Activated T-helper 1 cell treated with anti-CD3 and anti-CD28 coated beads, Interleukin-12 subunit alpha, Interleukin-12 subunit beta, Interleukin-2, Interleukin-4 antibody, amounts not matched to agents 30 ng/mL and 10 ng/mL and 1 ng/mL, durations not matched to agents 14 hours and 24 hours and 36 hours (primary cell): ENCODE measurements at regions of chr10 and their contacts with region 1.

Region 1: DNA sequence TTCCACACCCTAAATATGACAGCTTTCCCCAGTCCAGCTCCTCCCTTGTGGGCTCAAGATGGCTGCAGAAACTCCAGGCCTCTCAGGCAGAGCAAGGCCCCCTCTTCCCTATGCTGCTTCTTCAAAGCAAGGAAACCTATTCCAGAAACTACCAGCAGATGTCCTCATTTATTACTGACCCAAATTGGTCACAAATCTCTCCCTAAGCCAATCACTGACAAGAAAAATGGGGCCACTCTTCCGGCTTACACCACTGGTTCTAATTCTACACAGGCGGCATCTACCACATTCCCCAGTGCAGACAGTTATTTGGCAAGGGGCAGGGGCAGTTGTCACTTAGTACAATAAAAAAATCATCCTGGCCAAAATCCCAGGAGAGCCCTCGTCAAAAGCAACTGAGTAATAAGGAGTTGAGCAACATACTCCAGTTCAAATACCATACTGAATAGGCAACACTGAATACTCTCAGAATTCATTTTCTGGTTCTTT is 150.4 kb downstream of the SFMBT2 start:
- DNase-seq: no peak
- H3K4me3 Mint-ChIP-seq: peak overlapping the region; percentile 49
- H3K27ac Mint-ChIP-seq: peak overlapping the region; percentile 75
- H3K4me1 Mint-ChIP-seq: peaks cover 59% of the 10 kb centered on the region
- H3K27me3 Mint-ChIP-seq: no peaks in the 10 kb centered on the region

Region 2: GRCh38 chr10:7184660-7185366 is 75.6 kb before region 1 on chr10:
- intact Hi-C with region 1: loop called (anchors 1 kb)
- DNase-seq: no peak
- H3K4me3 Mint-ChIP-seq: peak overlapping the region; percentile 34
- H3K27ac Mint-ChIP-seq: peak overlapping the region; percentile 61
- H3K4me1 Mint-ChIP-seq: peaks cover 59% of the 10 kb centered on the region
- H3K27me3 Mint-ChIP-seq: no peaks in the 10 kb centered on the region

Region 3: GRCh38 chr10:7275761-7276440 is 15.4 kb after region 1 on chr10:
- intact Hi-C with region 1: loop called (anchors 1 kb)
- DNase-seq: no peak
- H3K4me3 Mint-ChIP-seq: no peak overlapping the region
- H3K27ac Mint-ChIP-seq: peak overlapping the region; percentile 83
- H3K4me1 Mint-ChIP-seq: peaks cover 57% of the 10 kb centered on the region
- H3K27me3 Mint-ChIP-seq: no peaks in the 10 kb centered on the region

Region 4: GRCh38 chr10:8102708-8103401 is 842.4 kb after region 1 on chr10:
- intact Hi-C with region 1: no loop called
- DNase-seq: no peak
- H3K4me3 Mint-ChIP-seq: no peak overlapping the region
- H3K27ac Mint-ChIP-seq: no peak overlapping the region
- H3K4me1 Mint-ChIP-seq: peaks cover 10% of the 10 kb centered on the region
- H3K27me3 Mint-ChIP-seq: peaks cover 8% of the 10 kb centered on the region